Common myeloid progenitor, CD34-positive (primary cell): ENCODE measurements at regions of chr20 and their contacts with region 1.

Region 1: GRCh38 chr20:1802385-1803060 is 92.7 kb upstream of the SIRPA start:
- DNase-seq: peak; percentile 89 to 94 (median 92)
- H3K4me3 ChIP-seq: peak overlapping the region; percentile 67 to 88 (median 74)
- H3K27ac ChIP-seq: no peak overlapping the region
- H3K4me1 ChIP-seq: peaks cover 7 to 29% (median 26%) of the 10 kb centered on the region in 4 experiments
- H3K27me3 ChIP-seq: no peaks in the 10 kb centered on the region

Region 2: DNA sequence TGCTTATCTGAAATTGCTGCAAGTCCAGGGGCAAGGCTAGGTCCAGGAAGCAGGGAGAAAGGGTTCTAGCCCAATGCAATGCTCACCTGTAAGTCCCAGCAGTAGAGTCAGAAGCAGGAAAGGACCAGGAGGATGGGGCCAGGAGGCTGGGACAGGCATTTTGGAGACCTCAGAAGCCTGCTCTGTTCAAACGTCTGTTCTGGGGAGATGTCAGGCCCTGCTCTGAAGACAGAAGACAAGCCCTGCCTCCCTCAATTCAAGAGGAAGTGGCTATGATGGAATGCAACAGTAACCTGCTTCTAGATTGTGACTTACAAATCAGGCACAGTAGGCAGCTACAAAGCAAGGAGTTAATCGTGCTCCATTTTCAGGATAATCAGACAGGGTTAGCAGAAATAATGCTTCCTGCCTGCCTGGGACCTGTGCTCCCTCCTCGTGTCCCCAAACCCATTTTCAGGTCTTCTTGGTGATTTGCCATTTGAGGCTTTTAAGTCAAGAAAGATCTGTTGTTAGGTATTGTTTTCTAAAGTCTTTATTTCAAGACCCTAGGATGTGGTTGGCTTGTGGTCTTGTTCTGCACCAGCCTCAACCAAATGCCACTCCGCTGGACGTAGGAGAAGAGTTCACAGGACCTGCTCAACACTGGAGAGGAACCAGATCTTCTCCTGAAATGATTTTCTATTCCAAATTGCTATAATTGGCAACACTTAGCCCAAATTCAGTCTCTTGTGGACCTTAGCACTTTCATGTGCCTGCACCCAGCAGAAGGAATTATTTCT is 144.8 kb before region 1 on chr20 and contains the start of gene SIRPG:
- CTCF ChIA-PET with region 1: no interaction called
- POLR2A ChIA-PET with region 1: no interaction called
- DNase-seq: peak in 2 of 3 donors; percentile 6 to 13
- H3K4me3 ChIP-seq: peak within 1 kb of the TSS in 1 of 7 experiments; percentile 7
- H3K27ac ChIP-seq: no peak within 1 kb of the TSS
- H3K4me1 ChIP-seq: peaks cover 0 to 20% (median 2%) of the 10 kb centered on the region in 4 experiments
- H3K27me3 ChIP-seq: peaks cover 0 to 19% (median 11%) of the 10 kb centered on the region in 5 experiments

Region 3: DNA sequence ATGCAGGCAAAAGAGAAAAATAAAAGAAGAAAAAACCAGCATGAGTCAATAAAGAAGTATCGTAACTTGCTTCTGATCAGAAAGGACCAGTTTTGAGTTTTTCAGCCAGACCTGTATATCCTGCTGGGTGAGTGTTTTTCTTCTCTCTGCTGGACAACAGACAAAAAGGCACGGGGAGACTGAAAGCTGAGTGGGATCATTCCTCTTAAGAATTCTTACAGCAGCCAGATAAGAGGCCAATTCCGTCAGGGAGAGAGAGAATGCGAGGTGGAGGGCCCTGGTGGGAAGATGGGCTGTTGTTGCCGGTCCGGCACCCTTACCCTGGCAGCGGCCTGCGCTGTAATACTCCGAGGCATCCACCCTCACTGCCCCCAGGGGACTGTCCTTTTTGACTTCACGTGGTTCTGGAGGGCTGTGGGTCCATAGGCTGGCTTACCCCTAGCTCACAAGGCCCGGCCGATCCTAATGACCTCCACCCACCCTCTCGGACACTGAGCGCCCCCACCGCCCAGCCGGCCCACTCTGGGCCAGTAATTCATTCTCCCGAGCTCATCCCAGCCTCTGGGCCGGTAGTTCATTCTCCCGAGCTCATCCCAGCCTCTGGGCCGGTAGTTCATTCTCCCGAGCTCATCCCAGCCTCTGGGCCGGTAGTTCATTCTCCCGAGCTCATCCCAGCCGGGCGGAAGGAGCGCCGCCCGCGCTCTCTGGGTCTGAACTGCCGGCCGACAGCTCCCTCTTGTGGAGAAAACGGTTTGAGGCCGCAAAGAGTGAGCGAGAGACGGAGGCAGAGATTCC is 25.6 kb before region 1 on chr20:
- CTCF ChIA-PET with region 1: interaction called, 11 read pairs
- POLR2A ChIA-PET with region 1: no interaction called
- DNase-seq: peak; percentile 70 to 82 (median 77)
- H3K4me3 ChIP-seq: peak overlapping the region; percentile 66 to 78 (median 74)
- H3K27ac ChIP-seq: peak overlapping the region; percentile 33 to 69
- H3K4me1 ChIP-seq: peaks cover 0 to 9% (median 9%) of the 10 kb centered on the region in 4 experiments
- H3K27me3 ChIP-seq: peaks cover 0 to 5% (median 0%) of the 10 kb centered on the region in 5 experiments

Region 4: DNA sequence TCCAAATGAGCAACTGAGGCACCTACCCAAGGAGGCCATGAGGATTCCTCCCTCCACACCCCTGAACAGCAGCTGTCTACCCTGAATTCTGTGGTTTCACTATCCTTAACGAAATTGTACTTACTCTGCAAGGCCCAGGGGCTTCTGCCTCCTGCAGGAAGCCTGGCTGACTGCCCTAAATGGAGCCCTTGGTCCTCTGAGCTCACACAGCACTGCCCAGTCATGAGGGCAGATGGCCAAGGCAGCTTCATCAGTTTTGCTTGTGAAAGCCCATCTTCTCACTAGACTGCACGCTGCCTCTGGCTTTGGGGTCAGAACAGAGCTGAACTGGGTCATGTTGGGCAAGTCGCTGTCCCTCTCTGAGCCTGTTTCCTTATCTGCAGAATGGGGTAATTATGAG is 66.3 kb after region 1 on chr20:
- CTCF ChIA-PET with region 1: interaction called, 13 read pairs
- POLR2A ChIA-PET with region 1: no interaction called
- DNase-seq: no peak
- H3K4me3 ChIP-seq: no peak overlapping the region
- H3K27ac ChIP-seq: no peak overlapping the region
- H3K4me1 ChIP-seq: peaks cover 0 to 27% (median 18%) of the 10 kb centered on the region in 4 experiments
- H3K27me3 ChIP-seq: peaks cover 0 to 3% (median 0%) of the 10 kb centered on the region in 5 experiments